CD8-positive, alpha-beta T cell (primary cell): ENCODE measurements at regions of chr12 and their contacts with region 1.

Region 1: GRCh38 chr12:10153271-10154144 is 18.4 kb downstream of the OLR1 start:
- DNase-seq: peak; percentile 21 to 78 (median 53)
- ATAC-seq: peak; percentile 88
- H3K4me3 ChIP-seq: peak overlapping the region; percentile 75 to 80
- H3K4me3 Mint-ChIP-seq: peak overlapping the region; percentile 94
- H3K27ac ChIP-seq: peak overlapping the region in 1 of 2 experiments; percentile 5
- H3K27ac Mint-ChIP-seq: peak overlapping the region; percentile 79
- H3K4me1 ChIP-seq: peaks cover 3% of the 10 kb centered on the region
- H3K4me1 Mint-ChIP-seq: peaks cover 13% of the 10 kb centered on the region
- H3K27me3 ChIP-seq: no peaks in the 10 kb centered on the region
- H3K27me3 Mint-ChIP-seq: no peaks in the 10 kb centered on the region
- CTCF ChIP-seq: peak; percentile 92

Region 2: DNA sequence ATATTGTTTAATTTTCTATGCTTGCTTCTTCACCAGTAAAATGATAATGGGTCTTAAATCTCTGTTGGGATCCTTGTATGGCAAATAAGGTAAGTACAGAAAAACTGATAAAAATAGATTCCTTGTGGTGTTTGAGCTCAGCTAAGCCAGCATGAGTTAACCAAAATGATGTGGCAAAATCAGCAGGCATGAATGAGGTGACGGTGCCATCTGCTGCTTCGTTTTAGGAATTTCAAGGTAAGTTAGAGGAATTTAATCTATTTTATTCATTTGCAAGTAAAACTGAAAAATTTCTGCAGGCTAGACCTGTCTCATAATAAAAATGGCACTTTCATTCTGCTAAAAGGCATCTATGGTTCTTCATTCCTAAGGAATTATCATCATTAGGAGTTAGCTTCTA is 13.5 kb before region 1 on chr12:
- CTCF ChIA-PET with region 1: interaction called, 27 read pairs
- POLR2A ChIA-PET with region 1: interaction called, 4 read pairs
- intact Hi-C with region 1: no loop called
- DNase-seq: peak in 6 of 9 experiments; percentile 9 to 69 (median 46)
- ATAC-seq: peak; percentile 51
- H3K4me3 ChIP-seq: no peak overlapping the region
- H3K4me3 Mint-ChIP-seq: no peak overlapping the region
- H3K27ac ChIP-seq: no peak overlapping the region
- H3K27ac Mint-ChIP-seq: no peak overlapping the region
- H3K4me1 ChIP-seq: no peaks in the 10 kb centered on the region
- H3K4me1 Mint-ChIP-seq: peaks cover 2% of the 10 kb centered on the region
- H3K27me3 ChIP-seq: peaks cover 0 to 4% of the 10 kb centered on the region in 2 experiments
- H3K27me3 Mint-ChIP-seq: peaks cover 6% of the 10 kb centered on the region
- CTCF ChIP-seq: peak; percentile 68

Region 3: GRCh38 chr12:10190558-10191388 is 37.3 kb after region 1 on chr12:
- CTCF ChIA-PET with region 1: interaction called, 39 read pairs
- POLR2A ChIA-PET with region 1: no interaction called
- intact Hi-C with region 1: loop called (anchors 1 kb)
- DNase-seq: peak in 8 of 9 experiments; percentile 30 to 77 (median 58)
- ATAC-seq: peak; percentile 99
- H3K4me3 ChIP-seq: no peak overlapping the region
- H3K4me3 Mint-ChIP-seq: no peak overlapping the region
- H3K27ac ChIP-seq: no peak overlapping the region
- H3K27ac Mint-ChIP-seq: no peak overlapping the region
- H3K4me1 ChIP-seq: no peaks in the 10 kb centered on the region
- H3K4me1 Mint-ChIP-seq: peaks cover 6% of the 10 kb centered on the region
- H3K27me3 ChIP-seq: peaks cover 0 to 5% of the 10 kb centered on the region in 2 experiments
- H3K27me3 Mint-ChIP-seq: peaks cover 12% of the 10 kb centered on the region
- CTCF ChIP-seq: peak; percentile 83

Region 4: GRCh38 chr12:10364815-10365622 is 211.5 kb after region 1 on chr12:
- CTCF ChIA-PET with region 1: no interaction called
- POLR2A ChIA-PET with region 1: no interaction called
- intact Hi-C with region 1: no loop called
- DNase-seq: peak in 7 of 9 experiments; percentile 40 to 93 (median 70)
- ATAC-seq: peak; percentile 66
- H3K4me3 ChIP-seq: peak overlapping the region; percentile 60 to 77
- H3K4me3 Mint-ChIP-seq: no peak overlapping the region
- H3K27ac ChIP-seq: peak overlapping the region; percentile 71 to 86
- H3K27ac Mint-ChIP-seq: no peak overlapping the region
- H3K4me1 ChIP-seq: peaks cover 83% of the 10 kb centered on the region
- H3K4me1 Mint-ChIP-seq: peaks cover 36% of the 10 kb centered on the region
- H3K27me3 ChIP-seq: no peaks in the 10 kb centered on the region
- H3K27me3 Mint-ChIP-seq: no peaks in the 10 kb centered on the region
- CTCF ChIP-seq: no peak

Region 5: DNA sequence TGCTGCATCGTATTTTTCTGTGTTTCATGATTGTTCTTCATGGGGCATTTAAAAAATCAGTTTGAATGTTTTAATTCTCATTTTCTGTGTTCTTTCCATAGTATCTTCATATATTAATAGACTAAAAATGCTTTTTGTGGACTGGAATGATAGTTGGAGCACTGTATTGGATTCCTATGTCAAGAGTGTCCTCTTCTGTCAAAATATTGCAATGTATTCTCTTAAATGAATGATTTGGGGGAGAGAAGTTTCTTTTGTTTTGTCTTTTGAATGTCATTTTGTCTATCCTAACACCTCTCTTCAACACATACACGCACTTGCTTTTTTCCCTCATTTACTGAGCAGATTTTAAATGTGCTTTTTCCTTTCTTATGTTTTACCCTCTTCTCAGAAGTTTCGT is 347.5 kb after region 1 on chr12:
- CTCF ChIA-PET with region 1: no interaction called
- POLR2A ChIA-PET with region 1: no interaction called
- intact Hi-C with region 1: loop called in 1 of 2 experiments (anchors 10 kb)
- DNase-seq: peak in 2 of 9 experiments; percentile 36 to 59
- ATAC-seq: no peak
- H3K4me3 ChIP-seq: no peak overlapping the region
- H3K4me3 Mint-ChIP-seq: peak overlapping the region; percentile 57
- H3K27ac ChIP-seq: no peak overlapping the region
- H3K27ac Mint-ChIP-seq: peak overlapping the region; percentile 82
- H3K4me1 ChIP-seq: peaks cover 56% of the 10 kb centered on the region
- H3K4me1 Mint-ChIP-seq: peaks cover 51% of the 10 kb centered on the region
- H3K27me3 ChIP-seq: no peaks in the 10 kb centered on the region
- H3K27me3 Mint-ChIP-seq: no peaks in the 10 kb centered on the region
- CTCF ChIP-seq: no peak

Region 6: GRCh38 chr12:10673660-10674384 is 520.3 kb after region 1 on chr12 and contains the start of gene STYK1:
- CTCF ChIA-PET with region 1: interaction called, 12 read pairs
- POLR2A ChIA-PET with region 1: interaction called, 3 read pairs
- intact Hi-C with region 1: loop called (anchors 1 kb)
- DNase-seq: peak; percentile 64 to 89 (median 76)
- ATAC-seq: peak; percentile 72
- H3K4me3 ChIP-seq: peak within 1 kb of the TSS; percentile 41 to 57
- H3K4me3 Mint-ChIP-seq: peak within 1 kb of the TSS; percentile 82
- H3K27ac ChIP-seq: peak within 1 kb of the TSS; percentile 50 to 75
- H3K27ac Mint-ChIP-seq: peak within 1 kb of the TSS; percentile 92
- H3K4me1 ChIP-seq: peaks cover 25% of the 10 kb centered on the region
- H3K4me1 Mint-ChIP-seq: peaks cover 43% of the 10 kb centered on the region
- H3K27me3 ChIP-seq: no peaks in the 10 kb centered on the region
- H3K27me3 Mint-ChIP-seq: peaks cover 7% of the 10 kb centered on the region
- CTCF ChIP-seq: peak; percentile 95
- total RNA-seq, gene STYK1: 0.57 to 0.89 TPM

Region 7: GRCh38 chr12:11486623-11487444 is 1333.3 kb after region 1 on chr12:
- CTCF ChIA-PET with region 1: interaction called, 5 read pairs
- POLR2A ChIA-PET with region 1: no interaction called
- intact Hi-C with region 1: loop called in 1 of 2 experiments (anchors 2 kb)
- DNase-seq: peak; percentile 55 to 92 (median 79)
- ATAC-seq: peak; percentile 99
- H3K4me3 ChIP-seq: no peak overlapping the region
- H3K4me3 Mint-ChIP-seq: no peak overlapping the region
- H3K27ac ChIP-seq: no peak overlapping the region
- H3K27ac Mint-ChIP-seq: no peak overlapping the region
- H3K4me1 ChIP-seq: no peaks in the 10 kb centered on the region
- H3K4me1 Mint-ChIP-seq: peaks cover 8% of the 10 kb centered on the region
- H3K27me3 ChIP-seq: no peaks in the 10 kb centered on the region
- H3K27me3 Mint-ChIP-seq: no peaks in the 10 kb centered on the region
- CTCF ChIP-seq: peak; percentile 100